A549 (cell line): ENCODE measurements at regions of chr9 and their contacts with region 1.

Region 1: GRCh38 chr9:34446468-34446891 is 11.9 kb downstream of the FAM219A start:
- DNase-seq: no peak
- ATAC-seq: no peak
- H3K4me3 ChIP-seq: no peak overlapping the region
- H3K27ac ChIP-seq: no peak overlapping the region
- H3K4me1 ChIP-seq: no peaks in the 10 kb centered on the region
- CTCF ChIP-seq: no peak
- EP300 ChIP-seq: no peak
- POLR2A ChIP-seq: no peak
- RAD21 ChIP-seq: no peak

Region 2: GRCh38 chr9:34458013-34458958 is 11.8 kb after region 1 on chr9 and contains the starts of genes DNAI1 and FAM219A:
- CTCF ChIA-PET with region 1: interaction called, 17 read pairs
- POLR2A ChIA-PET with region 1: interaction called, 3 read pairs
- DNase-seq: peak; percentile 94 to 98
- ATAC-seq: peak; percentile 92 to 95
- H3K4me3 ChIP-seq: peak within 1 kb of the TSS; percentile 87
- H3K27ac ChIP-seq: peak within 1 kb of the TSS; percentile 84 to 94
- H3K4me1 ChIP-seq: peaks cover 17% of the 10 kb centered on the region; the same call in 2 of the 3 replicates
- CTCF ChIP-seq: no peak
- EP300 ChIP-seq: no peak
- POLR2A ChIP-seq: peak; percentile 78
- RAD21 ChIP-seq: no peak
- polyA plus RNA-seq, gene DNAI1: 0.16 and 0.27 TPM in 2 replicates
- polyA plus RNA-seq, gene FAM219A: 8.1 and 10.4 TPM in 2 replicates

Region 3: GRCh38 chr9:34701769-34702736 is 255.6 kb after region 1 on chr9:
- CTCF ChIA-PET with region 1: no interaction called
- POLR2A ChIA-PET with region 1: no interaction called
- DNase-seq: peak; percentile 78 to 90
- ATAC-seq: peak; percentile 90 to 93
- H3K4me3 ChIP-seq: peak overlapping the region; percentile 57
- H3K27ac ChIP-seq: peak overlapping the region; percentile 51 to 87
- H3K4me1 ChIP-seq: no peaks in the 10 kb centered on the region
- CTCF ChIP-seq: peak; percentile 96
- EP300 ChIP-seq: no peak
- POLR2A ChIP-seq: no peak
- RAD21 ChIP-seq: peak; percentile 72 to 73